Prostate gland (tissue), 2 donors: ENCODE measurements at regions of chr10 and their contacts with region 1.

Region 1: DNA sequence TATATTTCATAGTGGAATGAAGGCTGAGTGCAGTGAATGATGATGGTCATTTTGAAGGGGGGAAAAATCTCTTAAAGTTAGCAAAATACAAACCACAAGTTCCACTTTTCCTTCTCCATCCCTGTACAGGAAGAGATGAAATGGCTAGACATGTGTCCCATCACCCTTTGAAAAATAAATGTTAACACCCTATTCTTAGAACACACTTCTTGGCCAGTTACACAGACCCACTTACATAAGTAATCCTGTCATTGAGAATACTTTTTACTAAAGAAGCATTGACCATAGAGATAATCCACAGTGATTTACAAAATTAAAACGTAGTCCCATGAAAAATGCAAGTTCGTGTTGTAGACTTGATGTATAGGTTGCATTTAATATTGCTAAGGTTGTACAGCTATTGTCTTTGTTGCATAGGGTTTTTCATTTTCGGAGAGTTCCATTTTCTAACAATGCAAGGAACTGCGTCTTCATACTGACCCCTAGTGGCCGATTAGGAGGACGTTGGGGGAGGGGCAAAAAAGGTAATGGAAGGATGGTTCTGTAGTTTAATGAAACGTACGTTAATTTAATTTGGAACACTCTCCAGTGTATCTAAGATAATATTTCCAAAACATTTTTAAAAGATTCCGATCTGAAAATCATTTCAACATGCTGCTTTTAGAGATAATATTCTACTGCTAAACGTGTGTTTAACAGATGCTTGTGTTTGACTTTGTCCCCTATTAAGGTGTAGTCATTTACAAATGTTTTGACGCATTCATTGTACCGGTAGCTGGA is 60.9 kb downstream of the ARMC3 start:
- DNase-seq: peak; percentile 68
- H3K4me3 ChIP-seq: no peak overlapping the region
- H3K27ac ChIP-seq: no peak overlapping the region
- H3K4me1 ChIP-seq: no peaks in the 10 kb centered on the region
- H3K27me3 ChIP-seq: no peaks in the 10 kb centered on the region
- CTCF ChIP-seq: peak; percentile 76 to 92 (median 90)
- POLR2A ChIP-seq: no peak

Region 2: GRCh38 chr10:22010973-22011408 is 977.8 kb before region 1 on chr10:
- intact Hi-C with region 1: loop called (anchors 5 kb)
- DNase-seq: no peak
- H3K4me3 ChIP-seq: no peak overlapping the region
- H3K27ac ChIP-seq: no peak overlapping the region
- H3K4me1 ChIP-seq: no peaks in the 10 kb centered on the region
- H3K27me3 ChIP-seq: no peaks in the 10 kb centered on the region
- CTCF ChIP-seq: peak in 3 of 4 experiments; percentile 48 to 76 (median 51)
- POLR2A ChIP-seq: no peak

Region 3: GRCh38 chr10:22597138-22597537 is 391.6 kb before region 1 on chr10:
- intact Hi-C with region 1: loop called (anchors 10 kb)
- DNase-seq: no peak
- H3K4me3 ChIP-seq: no peak overlapping the region
- H3K27ac ChIP-seq: no peak overlapping the region
- H3K4me1 ChIP-seq: no peaks in the 10 kb centered on the region
- H3K27me3 ChIP-seq: no peaks in the 10 kb centered on the region
- CTCF ChIP-seq: no peak
- POLR2A ChIP-seq: no peak

Region 4: DNA sequence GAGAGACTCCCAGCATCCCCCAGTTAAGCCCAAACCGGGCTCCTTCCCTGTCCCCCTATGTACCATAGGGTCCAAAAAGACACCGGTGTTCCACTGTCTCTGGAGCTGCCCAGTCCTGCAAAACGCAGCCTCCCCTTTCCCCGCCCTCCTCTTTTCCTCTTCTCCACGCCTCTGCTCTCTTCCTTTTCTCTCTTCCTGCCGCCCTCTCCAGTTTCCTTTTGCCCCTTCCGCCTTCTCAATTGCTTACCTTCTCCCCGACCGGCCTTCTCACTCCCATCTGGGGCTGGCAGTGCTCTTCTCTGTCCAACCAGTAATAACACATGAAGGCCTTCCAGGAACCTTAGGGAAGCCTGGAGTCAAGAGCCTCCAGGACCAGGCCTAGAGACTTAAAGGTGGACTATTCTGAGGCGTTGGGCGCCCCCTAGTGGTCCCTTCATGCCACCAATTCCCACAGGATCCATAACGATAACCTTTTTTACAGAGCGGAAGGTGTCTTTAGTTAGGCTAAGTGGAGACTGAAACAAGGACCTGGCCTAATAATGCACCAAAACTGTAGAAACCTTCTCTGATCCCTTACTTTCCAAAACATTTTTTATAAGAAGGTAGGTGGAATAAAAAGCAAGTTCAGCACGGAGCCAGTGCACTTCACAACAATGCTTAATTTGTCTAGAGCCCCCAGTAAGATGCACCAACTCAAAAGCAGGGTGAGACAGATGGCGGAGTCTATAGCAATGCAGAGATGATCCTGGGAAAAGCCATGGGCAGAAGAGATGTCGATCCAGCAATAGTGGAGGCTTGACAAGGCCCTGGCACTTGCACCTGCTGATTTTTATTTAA is 79.4 kb after region 1 on chr10:
- intact Hi-C with region 1: loop called (anchors 5 kb)
- DNase-seq: peak; percentile 64
- H3K4me3 ChIP-seq: no peak overlapping the region
- H3K27ac ChIP-seq: no peak overlapping the region
- H3K4me1 ChIP-seq: no peaks in the 10 kb centered on the region
- H3K27me3 ChIP-seq: no peaks in the 10 kb centered on the region
- CTCF ChIP-seq: peak; percentile 44 to 73 (median 65)
- POLR2A ChIP-seq: no peak

Region 5: DNA sequence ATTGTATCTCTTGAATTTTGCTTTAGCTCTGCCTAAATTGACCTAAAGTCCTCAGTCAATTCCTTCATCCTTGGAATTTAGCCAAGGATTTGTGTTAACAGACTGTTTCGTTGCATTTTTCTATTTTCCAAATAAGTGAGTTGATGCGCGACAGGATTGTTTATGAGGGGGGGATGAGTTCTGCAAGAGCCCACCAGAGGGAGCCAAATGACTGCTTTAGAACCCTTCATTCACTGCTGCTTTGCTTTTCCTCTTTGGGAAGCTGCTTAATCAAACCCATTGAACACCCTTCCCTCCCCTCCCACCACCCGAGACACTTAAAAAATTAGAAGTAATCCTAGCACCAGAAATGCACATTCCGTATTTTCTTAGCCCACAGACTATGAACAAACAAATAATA is 169.6 kb after region 1 on chr10:
- intact Hi-C with region 1: no loop called
- DNase-seq: peak; percentile 19
- H3K4me3 ChIP-seq: no peak overlapping the region
- H3K27ac ChIP-seq: no peak overlapping the region
- H3K4me1 ChIP-seq: no peaks in the 10 kb centered on the region
- H3K27me3 ChIP-seq: no peaks in the 10 kb centered on the region
- CTCF ChIP-seq: peak; percentile 38 to 69 (median 64)
- POLR2A ChIP-seq: no peak